ENCODE measurements at regions of chr4 and their contacts with region 1.

Region 1: DNA sequence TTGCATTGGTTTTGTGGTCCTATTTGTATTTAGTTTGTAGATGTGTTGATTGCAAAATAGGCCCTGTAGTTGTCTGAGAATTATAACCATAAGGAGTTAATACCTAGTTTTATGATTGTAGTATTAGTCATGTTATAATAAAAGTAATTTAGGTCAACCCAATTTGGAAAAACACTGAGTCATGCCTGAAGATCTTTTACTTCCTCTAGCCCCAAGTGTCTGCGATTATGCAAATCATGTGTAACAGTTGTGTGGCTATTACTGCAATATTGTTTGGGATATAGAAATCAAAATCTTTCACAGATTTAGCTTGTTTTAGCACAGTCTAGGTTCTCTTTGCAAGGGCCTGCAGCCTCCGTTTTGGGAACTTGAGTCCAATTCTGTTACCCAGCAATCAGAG is 12.6 kb downstream of the SRD5A3 start:
- DNase-seq: no peak
- H3K4me3 ChIP-seq: no peak overlapping the region
- H3K27ac ChIP-seq: peak overlapping the region; percentile 52 to 70 (median 64)
- H3K4me1 ChIP-seq: peaks cover 0 to 20% (median 15%) of the 10 kb centered on the region in 4 donors
- H3K27me3 ChIP-seq: no peaks in the 10 kb centered on the region
- CTCF ChIP-seq: no peak
- EP300 ChIP-seq: no peak
- POLR2A ChIP-seq: no peak

Region 2: GRCh38 chr4:53601251-53601764 is 1757.4 kb before region 1 on chr4:
- in situ Hi-C with region 1: no loop called
- intact Hi-C with region 1: no loop called
- DNase-seq: peak; percentile 29
- H3K4me3 ChIP-seq: no peak overlapping the region
- H3K27ac ChIP-seq: no peak overlapping the region
- H3K4me1 ChIP-seq: peaks cover 0 to 13% (median 9%) of the 10 kb centered on the region in 4 donors
- H3K27me3 ChIP-seq: no peaks in the 10 kb centered on the region
- CTCF ChIP-seq: peak in 4 of 5 experiments; percentile 7 to 30 (median 13)
- EP300 ChIP-seq: no peak
- POLR2A ChIP-seq: no peak

Region 3: GRCh38 chr4:54879576-54879975 is 479.1 kb before region 1 on chr4:
- in situ Hi-C with region 1: no loop called
- intact Hi-C with region 1: no loop called
- DNase-seq: no peak
- H3K4me3 ChIP-seq: no peak overlapping the region
- H3K27ac ChIP-seq: no peak overlapping the region
- H3K4me1 ChIP-seq: no peaks in the 10 kb centered on the region
- H3K27me3 ChIP-seq: no peaks in the 10 kb centered on the region
- CTCF ChIP-seq: no peak
- EP300 ChIP-seq: no peak
- POLR2A ChIP-seq: no peak

Region 4: GRCh38 chr4:55554453-55555030 is 195.9 kb after region 1 on chr4:
- in situ Hi-C with region 1: loop called in 1 of 4 experiments (anchors 10 kb)
- intact Hi-C with region 1: no loop called
- DNase-seq: no peak
- H3K4me3 ChIP-seq: no peak overlapping the region
- H3K27ac ChIP-seq: no peak overlapping the region
- H3K4me1 ChIP-seq: peaks cover 0 to 10% (median 0%) of the 10 kb centered on the region in 4 donors
- H3K27me3 ChIP-seq: no peaks in the 10 kb centered on the region
- CTCF ChIP-seq: peak; percentile 32 to 45 (median 35)
- EP300 ChIP-seq: no peak
- POLR2A ChIP-seq: no peak

Region 5: GRCh38 chr4:55736605-55737183 is 378.0 kb after region 1 on chr4:
- in situ Hi-C with region 1: loop called in 1 of 4 experiments (anchors 25 kb)
- intact Hi-C with region 1: no loop called
- DNase-seq: no peak
- H3K4me3 ChIP-seq: no peak overlapping the region
- H3K27ac ChIP-seq: no peak overlapping the region
- H3K4me1 ChIP-seq: peaks cover 0 to 15% (median 2%) of the 10 kb centered on the region in 4 donors
- H3K27me3 ChIP-seq: no peaks in the 10 kb centered on the region
- CTCF ChIP-seq: peak; percentile 22 to 29 (median 23)
- EP300 ChIP-seq: no peak
- POLR2A ChIP-seq: no peak

Region 6: DNA sequence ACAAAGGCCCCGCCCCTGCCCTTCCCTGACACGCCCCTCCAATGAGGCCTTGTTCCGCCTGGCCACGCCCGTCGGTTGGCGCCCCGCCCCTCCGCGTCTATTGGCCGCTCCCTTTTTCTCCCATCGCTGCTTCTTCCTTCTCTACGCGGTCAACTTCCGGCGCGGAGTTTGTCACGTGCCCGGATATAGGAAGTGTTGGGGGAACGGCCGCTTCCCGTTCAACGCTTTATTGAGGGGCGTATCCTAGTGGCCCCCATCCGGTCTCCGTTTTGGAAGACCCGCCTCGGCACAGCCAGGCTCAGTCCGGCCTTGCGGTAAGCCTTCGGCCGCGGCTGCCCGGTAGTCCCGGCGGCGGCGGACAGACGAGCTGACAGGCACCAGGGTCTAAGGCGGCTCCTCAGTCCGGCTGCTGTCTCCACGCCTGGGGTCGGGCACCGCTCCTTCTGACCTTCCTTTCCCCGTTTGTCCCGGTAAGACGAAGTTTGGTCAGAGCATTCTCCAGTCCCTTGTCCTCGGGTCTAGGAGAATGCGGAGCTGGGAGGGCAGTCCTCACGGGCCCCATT is 494.9 kb after region 1 on chr4 and contains the start of gene EXOC1:
- in situ Hi-C with region 1: loop called in 1 of 4 experiments (anchors 25 kb)
- intact Hi-C with region 1: no loop called
- DNase-seq: peak; percentile 100
- H3K4me3 ChIP-seq: peak within 1 kb of the TSS; percentile 68 to 80 (median 70)
- H3K27ac ChIP-seq: peak within 1 kb of the TSS; percentile 83 to 87 (median 85)
- H3K4me1 ChIP-seq: peaks cover 0 to 27% (median 17%) of the 10 kb centered on the region in 4 donors
- H3K27me3 ChIP-seq: no peaks in the 10 kb centered on the region
- CTCF ChIP-seq: no peak
- EP300 ChIP-seq: no peak
- POLR2A ChIP-seq: peak; percentile 76
- total RNA-seq, gene EXOC1: 26.2 to 60.8 (median 43.1) TPM

Measured in transverse colon (tissue), 4 donors.